Caco-2 (cell line): ENCODE measurements at regions of chr17 and their contacts with region 1.

Region 1: DNA sequence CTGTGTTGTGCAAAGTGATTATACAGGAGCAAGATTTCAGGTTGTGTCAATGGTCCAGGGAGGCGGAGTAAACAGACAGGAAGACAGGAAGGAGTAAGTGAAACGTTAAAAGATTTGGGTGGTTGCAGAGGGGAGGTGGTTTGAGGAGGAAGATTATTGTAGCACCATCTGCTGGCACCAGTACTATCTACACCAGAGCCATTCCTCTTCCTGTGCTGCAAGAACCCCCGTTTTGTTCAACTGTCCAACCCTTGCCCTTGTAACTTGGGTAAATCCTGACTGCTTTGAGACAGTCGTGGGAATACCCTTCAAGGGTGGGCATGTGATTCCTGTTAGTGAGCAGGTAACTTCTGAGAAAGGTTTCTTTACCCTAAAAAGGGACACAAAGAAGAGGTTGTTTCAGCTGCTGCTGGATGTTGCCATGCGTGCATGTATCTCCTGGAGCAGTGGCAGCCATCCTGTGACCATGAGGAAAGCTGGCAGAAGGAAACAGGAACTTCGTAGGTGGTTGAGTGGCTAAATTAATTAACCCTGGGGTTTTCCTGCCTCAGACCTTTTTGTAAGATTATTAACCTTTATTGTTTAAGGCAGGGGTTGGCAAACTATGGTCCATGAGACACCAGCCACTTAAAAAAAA is 124.1 kb downstream of the PRKCA start:
- DNase-seq: peak; percentile 47 to 64
- H3K4me3 ChIP-seq: no peak overlapping the region
- H3K4me3 Mint-ChIP-seq: no peak overlapping the region
- H3K27ac Mint-ChIP-seq: peak overlapping the region; percentile 5
- H3K4me1 ChIP-seq: peaks cover 21% of the 10 kb centered on the region
- H3K4me1 Mint-ChIP-seq: peaks cover 15% of the 10 kb centered on the region
- H3K27me3 ChIP-seq: no peaks in the 10 kb centered on the region
- H3K27me3 Mint-ChIP-seq: no peaks in the 10 kb centered on the region
- CTCF ChIP-seq: peak; percentile 34 to 39

Region 2: GRCh38 chr17:66200685-66201092 is 225.8 kb before region 1 on chr17:
- CTCF ChIA-PET with region 1: no interaction called
- POLR2A ChIA-PET with region 1: no interaction called
- intact Hi-C with region 1: loop called (anchors 1 kb)
- DNase-seq: peak; percentile 77 to 79
- H3K4me3 ChIP-seq: no peak overlapping the region
- H3K4me3 Mint-ChIP-seq: no peak overlapping the region
- H3K27ac Mint-ChIP-seq: peak overlapping the region; percentile 27
- H3K4me1 ChIP-seq: peaks cover 5% of the 10 kb centered on the region
- H3K4me1 Mint-ChIP-seq: peaks cover 7% of the 10 kb centered on the region
- H3K27me3 ChIP-seq: no peaks in the 10 kb centered on the region
- H3K27me3 Mint-ChIP-seq: no peaks in the 10 kb centered on the region
- CTCF ChIP-seq: peak; percentile 80 to 83

Region 3: GRCh38 chr17:66301797-66302741 is 124.4 kb before region 1 on chr17 and contains the start of gene PRKCA:
- CTCF ChIA-PET with region 1: no interaction called
- POLR2A ChIA-PET with region 1: no interaction called
- intact Hi-C with region 1: loop called (anchors 2 kb)
- DNase-seq: peak; percentile 65 to 85
- H3K4me3 ChIP-seq: peak within 1 kb of the TSS; percentile 89
- H3K4me3 Mint-ChIP-seq: peak within 1 kb of the TSS; percentile 92
- H3K27ac Mint-ChIP-seq: peak within 1 kb of the TSS; percentile 82
- H3K4me1 ChIP-seq: no peaks in the 10 kb centered on the region; the same call in 1 of the 2 replicates
- H3K4me1 Mint-ChIP-seq: peaks cover 12% of the 10 kb centered on the region
- H3K27me3 ChIP-seq: no peaks in the 10 kb centered on the region
- H3K27me3 Mint-ChIP-seq: no peaks in the 10 kb centered on the region
- CTCF ChIP-seq: no peak
- total RNA-seq, gene PRKCA: 29.6 and 34.7 TPM in 2 replicates

Region 4: GRCh38 chr17:66312954-66313724 is 113.4 kb before region 1 on chr17:
- CTCF ChIA-PET with region 1: no interaction called
- POLR2A ChIA-PET with region 1: no interaction called
- intact Hi-C with region 1: no loop called
- DNase-seq: no peak
- H3K4me3 ChIP-seq: no peak overlapping the region
- H3K4me3 Mint-ChIP-seq: no peak overlapping the region
- H3K27ac Mint-ChIP-seq: no peak overlapping the region
- H3K4me1 ChIP-seq: no peaks in the 10 kb centered on the region
- H3K4me1 Mint-ChIP-seq: peaks cover 7% of the 10 kb centered on the region
- H3K27me3 ChIP-seq: no peaks in the 10 kb centered on the region
- H3K27me3 Mint-ChIP-seq: no peaks in the 10 kb centered on the region
- CTCF ChIP-seq: no peak